ENCODE measurements at regions of chr20 and their contacts with region 1.

Region 1: GRCh38 chr20:5788385-5788895 is 38.2 kb downstream of the SHLD1 start:
- DNase-seq: peak; percentile 88
- H3K4me3 ChIP-seq: no peak overlapping the region
- H3K27ac ChIP-seq: no peak overlapping the region
- H3K27me3 ChIP-seq: no peaks in the 10 kb centered on the region
- CTCF ChIP-seq: peak; percentile 81

Region 2: GRCh38 chr20:5465604-5465927 is 322.9 kb before region 1 on chr20:
- in situ Hi-C with region 1: no loop called
- DNase-seq: no peak
- H3K4me3 ChIP-seq: no peak overlapping the region
- H3K27ac ChIP-seq: no peak overlapping the region
- H3K27me3 ChIP-seq: no peaks in the 10 kb centered on the region
- CTCF ChIP-seq: no peak

Region 3: DNA sequence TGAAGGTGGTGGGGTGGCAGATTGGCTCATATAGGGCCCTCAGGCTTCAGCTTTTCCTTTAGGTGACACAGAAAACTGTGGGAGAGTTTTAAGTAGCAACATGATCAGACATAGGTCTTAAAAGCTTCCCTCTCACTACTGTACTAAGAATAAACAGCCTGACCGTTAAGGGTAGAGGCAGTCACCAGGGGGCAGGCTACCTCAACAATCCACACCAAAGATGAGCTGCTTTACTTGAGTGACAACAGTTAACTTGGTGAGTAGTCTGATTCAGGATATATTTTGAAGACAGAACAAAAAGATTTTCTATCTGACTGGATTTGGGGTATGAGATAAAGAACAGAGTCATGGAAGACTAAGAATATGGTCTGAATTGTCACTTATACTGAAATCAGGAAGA is 231.3 kb before region 1 on chr20:
- in situ Hi-C with region 1: loop called (anchors 25 kb)
- DNase-seq: peak; percentile 65
- H3K4me3 ChIP-seq: no peak overlapping the region
- H3K27ac ChIP-seq: no peak overlapping the region
- H3K27me3 ChIP-seq: no peaks in the 10 kb centered on the region
- CTCF ChIP-seq: peak; percentile 80

Region 4: GRCh38 chr20:5863040-5863833 is 74.8 kb after region 1 on chr20:
- in situ Hi-C with region 1: no loop called
- DNase-seq: peak; percentile 82
- H3K4me3 ChIP-seq: no peak overlapping the region
- H3K27ac ChIP-seq: peak overlapping the region; percentile 53
- H3K27me3 ChIP-seq: no peaks in the 10 kb centered on the region
- CTCF ChIP-seq: no peak